GM18951 (cell line): ENCODE measurements at regions of chr19 and their contacts with region 1.

Region 1: DNA sequence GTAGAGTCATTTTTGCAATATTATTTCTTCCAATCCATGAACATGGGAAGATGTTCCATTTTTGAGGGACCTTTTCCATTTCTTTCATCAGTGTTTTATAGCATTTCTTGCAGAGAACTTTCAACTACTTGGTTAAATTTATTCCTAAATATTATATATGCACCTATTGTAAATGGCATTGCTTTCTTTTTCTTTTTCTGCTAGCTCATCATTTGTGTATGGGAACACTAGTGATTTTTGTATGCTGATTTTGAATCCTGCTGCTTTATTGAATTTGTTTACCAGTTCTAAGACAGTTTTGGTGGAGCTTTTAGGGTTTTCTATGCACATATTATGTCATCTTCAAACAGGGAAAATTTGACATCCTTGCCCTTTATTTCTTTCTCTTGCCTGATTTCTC is 7.2 kb upstream of the CYP4F2 start:
- POLR2A ChIP-seq: no peak

Region 2: DNA sequence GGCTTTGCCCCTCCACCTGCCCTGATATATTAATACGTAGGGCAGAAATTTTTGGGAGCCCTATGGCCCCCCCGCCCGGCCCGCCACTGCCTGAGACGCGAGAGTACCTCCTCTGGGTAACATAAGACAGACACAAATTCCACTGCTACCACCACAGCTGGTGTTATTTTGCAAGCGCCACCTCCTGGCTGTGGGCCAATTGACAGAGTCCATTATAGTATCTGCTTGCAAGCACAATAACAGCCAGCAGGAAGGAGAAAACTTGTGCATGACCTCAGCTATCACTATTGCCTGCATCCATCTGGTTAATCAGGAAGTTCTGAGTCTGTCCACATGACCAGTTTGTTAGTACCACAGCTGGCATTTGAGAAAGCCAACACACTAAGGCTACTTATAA is 202.5 kb before region 1 on chr19:
- in situ Hi-C with region 1: loop called (anchors 5 kb)
- POLR2A ChIP-seq: no peak